GM23248 (cell line): ENCODE measurements at regions of chr2 and their contacts with region 1.

Region 1: DNA sequence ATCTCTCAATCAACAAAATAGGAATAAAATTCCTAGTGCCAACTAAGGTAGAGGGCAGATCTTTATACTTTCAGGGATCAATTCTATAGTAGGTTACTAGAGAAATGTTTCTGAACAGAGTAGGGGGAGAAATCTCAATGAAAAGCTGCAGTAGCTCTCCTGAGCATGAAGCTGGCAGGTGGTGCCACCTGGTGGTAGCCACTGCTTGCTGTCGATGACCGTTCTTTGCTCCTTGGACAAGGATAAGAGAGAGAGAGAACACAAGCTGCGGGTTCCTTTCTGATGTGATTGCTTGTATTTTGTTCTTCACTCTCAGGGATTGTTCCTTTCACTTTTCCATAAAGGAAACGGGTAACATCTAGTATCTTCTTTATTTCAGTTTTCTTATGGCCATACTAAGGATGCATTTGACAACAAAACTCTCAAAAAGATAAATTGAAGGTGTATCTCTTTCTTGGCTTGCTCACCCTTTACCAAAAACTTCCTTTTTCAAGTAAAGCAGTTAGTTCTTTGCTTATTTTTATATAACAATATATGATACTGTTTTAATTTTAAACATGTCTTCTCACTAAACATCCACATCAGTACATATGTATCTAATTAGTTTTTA is 18.6 kb upstream of the MRPL19 start:
- DNase-seq: peak; percentile 84
- H3K4me3 ChIP-seq: no peak overlapping the region
- H3K27ac ChIP-seq: no peak overlapping the region
- H3K4me1 ChIP-seq: peaks cover 13% of the 10 kb centered on the region
- H3K27me3 ChIP-seq: no peaks in the 10 kb centered on the region

Region 2: GRCh38 chr2:75466708-75467311 is 161.2 kb before region 1 on chr2:
- in situ Hi-C with region 1: loop called (anchors 5 kb)
- DNase-seq: peak; percentile 56
- H3K4me3 ChIP-seq: no peak overlapping the region
- H3K27ac ChIP-seq: no peak overlapping the region
- H3K4me1 ChIP-seq: peaks cover 5% of the 10 kb centered on the region; the same call in 1 of the 2 replicates
- H3K27me3 ChIP-seq: no peaks in the 10 kb centered on the region